Transverse colon (tissue), 4 donors: ENCODE measurements at regions of chr12 and their contacts with region 1.

Region 1: GRCh38 chr12:42985506-42985905 is 396.0 kb upstream of the PRICKLE1 start:
- DNase-seq: no peak
- H3K4me3 ChIP-seq: no peak overlapping the region
- H3K27ac ChIP-seq: no peak overlapping the region
- H3K4me1 ChIP-seq: no peaks in the 10 kb centered on the region
- H3K27me3 ChIP-seq: no peaks in the 10 kb centered on the region
- CTCF ChIP-seq: no peak
- EP300 ChIP-seq: no peak
- POLR2A ChIP-seq: no peak

Region 2: GRCh38 chr12:42953021-42953420 is 32.5 kb before region 1 on chr12:
- in situ Hi-C with region 1: no loop called
- intact Hi-C with region 1: loop called (anchors 2 kb)
- DNase-seq: no peak
- H3K4me3 ChIP-seq: no peak overlapping the region
- H3K27ac ChIP-seq: no peak overlapping the region
- H3K4me1 ChIP-seq: no peaks in the 10 kb centered on the region
- H3K27me3 ChIP-seq: no peaks in the 10 kb centered on the region
- CTCF ChIP-seq: no peak
- EP300 ChIP-seq: no peak
- POLR2A ChIP-seq: no peak

Region 3: DNA sequence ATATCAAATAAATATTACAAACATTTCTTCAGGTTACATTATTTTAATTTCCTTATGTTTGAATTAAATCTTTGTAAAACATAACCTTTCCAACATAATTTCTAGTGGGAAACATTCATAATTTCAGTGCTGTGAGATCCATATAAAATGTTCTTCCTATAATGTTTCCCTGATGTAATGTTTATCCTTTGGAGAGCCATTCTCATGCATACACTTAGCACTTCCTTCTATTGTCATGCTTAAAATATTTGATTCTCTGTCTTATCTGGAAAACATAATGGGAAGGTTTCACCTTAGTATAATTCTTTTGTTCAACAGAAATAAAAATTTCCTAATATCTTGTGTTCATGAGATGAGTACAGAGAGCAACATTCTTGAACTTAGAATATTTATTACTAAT is 94.0 kb after region 1 on chr12:
- in situ Hi-C with region 1: no loop called
- intact Hi-C with region 1: no loop called
- DNase-seq: no peak
- H3K4me3 ChIP-seq: no peak overlapping the region
- H3K27ac ChIP-seq: no peak overlapping the region
- H3K4me1 ChIP-seq: no peaks in the 10 kb centered on the region
- H3K27me3 ChIP-seq: no peaks in the 10 kb centered on the region
- CTCF ChIP-seq: no peak
- EP300 ChIP-seq: no peak
- POLR2A ChIP-seq: no peak

Region 4: GRCh38 chr12:43416981-43417380 is 431.5 kb after region 1 on chr12:
- in situ Hi-C with region 1: no loop called
- intact Hi-C with region 1: no loop called
- DNase-seq: no peak
- H3K4me3 ChIP-seq: no peak overlapping the region
- H3K27ac ChIP-seq: no peak overlapping the region
- H3K4me1 ChIP-seq: no peaks in the 10 kb centered on the region
- H3K27me3 ChIP-seq: no peaks in the 10 kb centered on the region
- CTCF ChIP-seq: no peak
- EP300 ChIP-seq: no peak
- POLR2A ChIP-seq: no peak